Activated naive CD4-positive, alpha-beta T cell treated with anti-CD3 and anti-CD28 coated beads, Interleukin-2, amount 10 ng/mL, durations not matched to agents 7 days and 5 days (primary cell): ENCODE measurements at regions of chr12 and their contacts with region 1.

Region 1: GRCh38 chr12:48995061-48995879 is 3.9 kb downstream of the DDN start:
- DNase-seq: peak; percentile 67
- H3K4me3 Mint-ChIP-seq: peak overlapping the region; percentile 13
- H3K27ac Mint-ChIP-seq: no peak overlapping the region
- H3K4me1 Mint-ChIP-seq: peaks cover 32% of the 10 kb centered on the region
- H3K27me3 Mint-ChIP-seq: peaks cover 95% of the 10 kb centered on the region

Region 2: GRCh38 chr12:48977315-48978281 is 17.7 kb before region 1 on chr12:
- CTCF ChIA-PET with region 1: interaction called, 121 read pairs
- DNase-seq: peak; percentile 83
- H3K4me3 Mint-ChIP-seq: peak overlapping the region; percentile 24
- H3K27ac Mint-ChIP-seq: no peak overlapping the region
- H3K4me1 Mint-ChIP-seq: peaks cover 51% of the 10 kb centered on the region
- H3K27me3 Mint-ChIP-seq: peaks cover 100% of the 10 kb centered on the region

Region 3: DNA sequence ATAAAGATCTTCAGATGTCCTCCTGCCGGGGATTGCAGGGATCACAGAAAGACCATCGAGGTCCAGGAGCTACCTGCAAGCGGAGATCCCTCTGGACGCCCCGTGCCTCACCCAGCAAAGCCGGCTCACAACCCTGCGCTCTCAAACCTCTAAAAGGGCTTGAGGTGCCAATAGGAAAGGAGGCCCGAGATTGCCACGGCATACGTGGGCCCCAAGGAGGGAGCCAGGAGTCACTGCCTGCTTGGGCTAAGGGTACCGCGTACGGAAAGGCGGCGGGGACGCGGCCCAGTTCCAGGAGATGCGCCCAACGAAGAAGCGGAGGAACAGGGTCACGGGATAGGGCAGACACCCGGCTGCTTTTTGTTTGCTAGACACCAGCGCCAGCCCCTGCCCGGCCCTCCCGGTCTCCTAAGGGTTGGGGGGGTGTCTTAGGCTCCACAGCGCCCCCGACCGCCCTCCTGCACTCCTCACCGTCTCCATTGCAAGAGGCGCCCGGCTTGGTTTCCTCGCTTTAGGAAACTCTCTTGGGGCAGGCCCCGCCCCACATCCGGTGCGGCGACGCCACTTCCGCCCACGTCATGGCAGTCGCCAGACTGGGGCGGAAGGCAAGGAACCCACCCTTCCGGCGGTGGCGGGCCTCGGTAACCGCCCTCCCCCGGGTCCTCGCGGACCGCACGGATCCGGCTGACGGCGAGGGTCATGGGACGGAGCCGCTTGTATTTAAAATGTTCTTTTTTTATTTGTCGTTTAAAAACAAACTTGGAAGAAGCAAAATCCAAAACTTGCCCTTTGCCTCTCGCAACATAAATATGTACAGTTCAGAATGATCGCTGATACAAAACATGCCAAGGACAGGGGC is 23.2 kb after region 1 on chr12 and contains the start of gene PRKAG1:
- CTCF ChIA-PET with region 1: interaction called, 58 read pairs
- DNase-seq: peak; percentile 98
- H3K4me3 Mint-ChIP-seq: peak within 1 kb of the TSS; percentile 95
- H3K27ac Mint-ChIP-seq: peak within 1 kb of the TSS; percentile 99
- H3K4me1 Mint-ChIP-seq: peaks cover 41% of the 10 kb centered on the region
- H3K27me3 Mint-ChIP-seq: no peaks in the 10 kb centered on the region

Region 4: DNA sequence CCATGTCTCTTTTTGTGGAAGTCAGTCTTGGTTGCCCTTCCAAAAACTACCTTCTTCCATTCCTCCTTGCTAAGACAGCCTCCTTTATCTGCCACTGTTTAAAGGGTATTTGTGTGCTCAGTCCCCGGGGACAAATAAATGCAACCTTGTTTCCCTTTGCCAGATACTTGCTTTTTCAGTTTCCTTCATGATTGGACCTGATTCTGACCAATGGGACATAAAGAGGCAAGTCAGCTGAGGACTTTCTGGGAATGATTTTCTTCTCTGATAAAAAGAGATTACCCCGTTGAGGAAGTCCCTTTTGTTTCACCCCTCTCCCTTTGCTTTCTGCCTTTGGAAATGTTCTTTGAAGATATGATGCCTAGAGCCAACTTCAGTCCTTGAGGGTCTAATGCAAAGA is 143.3 kb after region 1 on chr12:
- CTCF ChIA-PET with region 1: no interaction called
- DNase-seq: no peak
- H3K4me3 Mint-ChIP-seq: no peak overlapping the region
- H3K27ac Mint-ChIP-seq: no peak overlapping the region
- H3K4me1 Mint-ChIP-seq: peaks cover 5% of the 10 kb centered on the region
- H3K27me3 Mint-ChIP-seq: no peaks in the 10 kb centered on the region